Activated naive CD4-positive, alpha-beta T cell treated with anti-CD3 and anti-CD28 coated beads for 36 hours (primary cell): ENCODE measurements at regions of chr1 and their contacts with region 1.

Region 1: GRCh38 chr1:61077676-61078541 is 4.5 kb upstream of the NFIA start:
- DNase-seq: peak; percentile 96
- H3K4me3 Mint-ChIP-seq: peak overlapping the region; percentile 92
- H3K27ac Mint-ChIP-seq: peak overlapping the region; percentile 75
- H3K4me1 Mint-ChIP-seq: peaks cover 43% of the 10 kb centered on the region
- H3K27me3 Mint-ChIP-seq: peaks cover 9% of the 10 kb centered on the region

Region 2: GRCh38 chr1:59814180-59814900 is 1263.6 kb before region 1 on chr1:
- CTCF ChIA-PET with region 1: no interaction called
- intact Hi-C with region 1: loop called (anchors 1 kb)
- DNase-seq: peak; percentile 93
- H3K4me3 Mint-ChIP-seq: no peak overlapping the region
- H3K27ac Mint-ChIP-seq: peak overlapping the region; percentile 78
- H3K4me1 Mint-ChIP-seq: peaks cover 3% of the 10 kb centered on the region
- H3K27me3 Mint-ChIP-seq: peaks cover 8% of the 10 kb centered on the region

Region 3: DNA sequence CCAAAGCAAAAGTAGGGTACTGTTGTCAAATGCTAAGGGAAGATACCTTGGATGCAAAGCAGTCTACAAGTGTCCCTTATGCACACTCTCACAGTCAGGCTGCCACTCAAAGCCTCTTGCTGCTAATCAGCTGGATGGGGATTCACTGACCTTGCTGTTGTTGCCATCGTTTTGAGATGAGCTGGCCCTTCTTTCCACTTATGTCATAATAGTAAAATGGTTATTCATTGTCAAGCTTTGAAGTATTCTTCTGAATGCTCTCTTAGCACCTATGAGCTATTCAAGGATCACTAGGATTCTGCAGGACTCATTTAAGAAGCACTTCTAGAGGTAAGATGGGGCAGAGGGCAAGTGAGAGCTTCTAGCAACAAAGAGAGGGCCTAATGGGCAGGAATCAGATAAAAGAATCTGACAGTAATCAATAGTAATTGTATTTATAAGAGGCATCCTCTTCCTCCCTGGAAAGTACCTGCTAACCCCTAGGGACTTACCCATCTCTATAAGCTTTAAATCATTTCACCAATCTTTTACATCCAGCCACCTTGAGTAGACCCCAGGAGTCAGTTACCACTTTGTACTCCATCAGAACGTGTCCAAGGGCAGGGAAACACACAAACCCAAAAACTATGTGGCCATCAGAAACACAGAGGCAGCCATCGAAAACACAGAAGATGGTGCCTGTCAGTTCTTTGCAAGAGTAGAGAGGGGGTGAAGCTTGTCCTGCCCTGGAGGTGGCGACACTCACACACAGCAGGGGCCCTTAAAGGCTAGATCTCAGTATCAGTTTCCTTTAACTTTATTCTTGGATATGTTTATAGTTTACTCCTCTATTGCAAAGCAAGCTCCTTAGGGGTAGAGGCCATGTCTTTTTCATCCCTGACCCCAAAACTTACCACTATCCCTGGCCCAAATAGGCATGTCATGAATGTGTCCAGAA is 99.2 kb before region 1 on chr1:
- CTCF ChIA-PET with region 1: no interaction called
- intact Hi-C with region 1: no loop called
- DNase-seq: peak; percentile 57
- H3K4me3 Mint-ChIP-seq: no peak overlapping the region
- H3K27ac Mint-ChIP-seq: no peak overlapping the region
- H3K4me1 Mint-ChIP-seq: peaks cover 2% of the 10 kb centered on the region
- H3K27me3 Mint-ChIP-seq: no peaks in the 10 kb centered on the region

Region 4: GRCh38 chr1:61157468-61157987 is 79.6 kb after region 1 on chr1:
- CTCF ChIA-PET with region 1: no interaction called
- intact Hi-C with region 1: loop called (anchors 5 kb)
- DNase-seq: no peak
- H3K4me3 Mint-ChIP-seq: no peak overlapping the region
- H3K27ac Mint-ChIP-seq: no peak overlapping the region
- H3K4me1 Mint-ChIP-seq: peaks cover 16% of the 10 kb centered on the region
- H3K27me3 Mint-ChIP-seq: no peaks in the 10 kb centered on the region

Region 5: DNA sequence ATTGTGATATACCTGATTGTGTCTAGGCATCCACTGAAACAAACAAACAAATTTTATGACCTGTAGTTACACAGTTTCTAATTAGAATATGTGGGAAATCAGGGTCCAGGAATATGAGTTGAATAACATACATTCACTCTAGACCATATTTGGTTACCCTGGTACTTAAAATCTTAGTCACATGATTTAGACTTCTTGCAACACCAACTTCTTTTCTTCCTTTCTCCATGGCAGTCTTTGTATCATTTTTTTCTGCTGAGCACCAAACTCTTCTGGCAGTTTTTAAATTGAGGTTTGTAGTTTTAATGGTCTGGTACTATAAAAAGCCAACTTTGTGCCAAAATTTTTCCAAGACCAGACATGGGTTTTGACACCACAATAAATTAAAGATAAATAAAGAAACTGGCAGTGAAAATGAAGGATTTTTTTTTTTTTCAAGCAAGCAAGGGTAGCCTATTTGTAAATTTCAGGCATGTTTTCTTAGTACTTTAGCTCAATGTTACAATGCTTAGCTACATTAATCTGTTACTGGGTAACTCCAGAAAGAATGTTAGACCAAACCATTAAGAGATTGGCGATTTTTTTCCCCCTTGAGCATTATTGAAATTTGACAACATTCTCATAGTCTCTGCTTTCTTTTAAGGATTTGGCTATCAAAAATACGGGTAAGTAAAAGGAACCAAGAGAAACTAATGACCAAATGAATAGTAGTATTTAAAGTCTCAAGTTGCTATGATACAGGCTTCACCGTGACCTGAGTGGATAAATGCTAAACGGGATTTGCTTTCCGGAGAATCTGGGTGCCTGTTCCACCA is 112.9 kb after region 1 on chr1:
- CTCF ChIA-PET with region 1: no interaction called
- intact Hi-C with region 1: no loop called
- DNase-seq: no peak
- H3K4me3 Mint-ChIP-seq: no peak overlapping the region
- H3K27ac Mint-ChIP-seq: no peak overlapping the region
- H3K4me1 Mint-ChIP-seq: no peaks in the 10 kb centered on the region
- H3K27me3 Mint-ChIP-seq: peaks cover 3% of the 10 kb centered on the region

Region 6: GRCh38 chr1:61318319-61319125 is 240.6 kb after region 1 on chr1:
- CTCF ChIA-PET with region 1: interaction called, 4 read pairs
- intact Hi-C with region 1: loop called (anchors 1 kb)
- DNase-seq: peak; percentile 56
- H3K4me3 Mint-ChIP-seq: peak overlapping the region; percentile 45
- H3K27ac Mint-ChIP-seq: peak overlapping the region; percentile 67
- H3K4me1 Mint-ChIP-seq: peaks cover 21% of the 10 kb centered on the region
- H3K27me3 Mint-ChIP-seq: peaks cover 12% of the 10 kb centered on the region

Region 7: DNA sequence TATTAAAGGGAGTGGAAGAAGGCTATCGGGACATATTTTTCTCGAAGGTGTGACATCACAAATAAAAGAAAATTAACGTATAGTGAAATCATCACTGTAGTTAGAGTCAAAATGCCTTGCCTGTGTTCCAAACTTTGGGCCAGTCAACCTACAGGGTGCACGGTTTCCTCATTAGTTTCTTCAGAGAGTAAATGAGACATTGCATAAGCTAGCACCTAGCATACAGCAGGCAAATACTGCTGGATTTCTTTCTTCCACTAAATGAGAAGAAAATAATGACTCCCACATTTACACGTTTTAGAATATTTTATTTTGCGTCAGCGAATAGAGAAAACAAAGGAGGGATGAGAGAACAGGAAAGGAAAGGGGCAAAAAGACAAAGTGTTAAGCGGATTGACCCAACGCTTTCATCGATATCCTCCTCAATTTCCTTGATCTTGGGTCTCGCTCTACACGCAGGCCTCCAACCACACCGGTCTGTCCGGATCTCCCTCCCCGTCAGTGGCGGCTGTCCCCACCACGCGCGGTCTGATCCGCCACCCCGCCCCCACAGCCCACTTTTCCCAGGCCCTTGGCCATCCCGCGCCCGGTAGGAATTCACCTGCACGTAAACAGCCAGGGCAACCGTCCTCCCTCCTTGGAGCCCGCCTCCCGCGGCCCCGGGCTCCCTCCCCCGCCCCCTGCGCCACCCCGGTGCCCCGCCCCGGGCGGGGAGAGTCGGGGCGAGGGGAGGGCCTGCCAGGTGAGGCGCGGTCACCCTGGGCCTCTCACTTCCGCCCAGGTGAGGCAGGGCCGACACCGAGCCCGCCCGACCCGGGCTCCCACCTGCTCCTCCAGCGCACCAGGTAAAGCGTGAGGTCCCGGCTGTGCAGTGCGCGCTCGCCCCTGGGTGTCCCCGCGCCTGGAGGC is 664.1 kb after region 1 on chr1 and contains the start of gene PATJ:
- CTCF ChIA-PET with region 1: interaction called, 3 read pairs
- intact Hi-C with region 1: loop called (anchors 5 kb)
- DNase-seq: peak; percentile 65
- H3K4me3 Mint-ChIP-seq: peak within 1 kb of the TSS; percentile 93
- H3K27ac Mint-ChIP-seq: peak within 1 kb of the TSS; percentile 83
- H3K4me1 Mint-ChIP-seq: peaks cover 20% of the 10 kb centered on the region
- H3K27me3 Mint-ChIP-seq: no peaks in the 10 kb centered on the region
- total RNA-seq, gene PATJ: 13.3 to 13.5 TPM

Region 8: GRCh38 chr1:62687903-62688686 is 1610.2 kb after region 1 on chr1 and contains the start of gene DOCK7:
- CTCF ChIA-PET with region 1: no interaction called
- intact Hi-C with region 1: loop called (anchors 5 kb)
- DNase-seq: peak; percentile 56
- H3K4me3 Mint-ChIP-seq: peak within 1 kb of the TSS; percentile 86
- H3K27ac Mint-ChIP-seq: peak within 1 kb of the TSS; percentile 60
- H3K4me1 Mint-ChIP-seq: peaks cover 26% of the 10 kb centered on the region
- H3K27me3 Mint-ChIP-seq: peaks cover 3% of the 10 kb centered on the region
- total RNA-seq, gene DOCK7: 7.7 to 10.0 TPM